Activated CD4-positive, alpha-beta T cell treated with anti-CD3 and anti-CD28 coated beads, Interleukin-2, amount 10 ng/mL, durations not matched to agents 24 days and 14 days (primary cell): ENCODE measurements at regions of chr5 and their contacts with region 1.

Region 1: GRCh38 chr5:80083101-80083890 is 48.1 kb downstream of the THBS4 start:
- DNase-seq: peak; percentile 72
- H3K4me3 Mint-ChIP-seq: peak overlapping the region; percentile 76
- H3K27ac Mint-ChIP-seq: peak overlapping the region; percentile 81
- H3K4me1 Mint-ChIP-seq: peaks cover 7% of the 10 kb centered on the region
- H3K27me3 Mint-ChIP-seq: no peaks in the 10 kb centered on the region

Region 2: DNA sequence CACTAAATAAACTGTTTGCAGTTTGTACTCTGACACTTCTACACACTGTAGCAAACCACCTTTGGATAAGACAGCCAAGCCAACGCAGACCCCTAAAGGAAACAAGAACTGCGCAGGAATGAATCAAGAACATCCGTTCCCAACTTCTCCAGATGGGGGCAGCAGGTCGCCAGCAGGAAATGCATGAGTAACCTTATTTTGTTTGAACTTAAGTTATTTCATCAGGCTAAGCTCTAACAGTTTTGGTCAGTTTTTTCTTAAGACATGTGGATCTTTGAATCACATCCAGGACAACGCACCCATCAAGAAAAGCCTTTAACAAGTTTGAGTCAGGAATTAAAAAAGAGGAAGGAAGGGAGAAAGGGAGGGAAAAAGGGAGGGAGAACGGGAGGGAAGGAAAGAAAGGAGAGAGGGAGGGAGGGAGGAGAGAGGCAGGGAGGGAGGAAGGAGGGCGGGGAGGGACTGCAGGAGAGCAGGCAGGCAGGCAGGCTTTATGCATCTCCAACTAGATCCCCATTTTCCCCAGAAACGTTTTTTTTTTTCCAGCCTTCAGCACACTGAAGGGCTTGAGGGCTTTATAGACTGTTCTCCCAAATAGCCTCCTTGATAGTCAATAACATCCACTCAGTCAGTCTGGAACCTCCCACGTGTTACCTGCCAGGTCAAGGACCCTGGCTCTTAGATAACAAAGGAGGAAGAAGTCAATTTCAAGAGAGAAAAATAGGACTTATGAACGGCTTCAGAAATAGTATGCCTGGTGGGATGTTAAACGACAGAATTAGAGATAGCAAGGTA is 949.4 kb before region 1 on chr5:
- intact Hi-C with region 1: loop called (anchors 2 kb)
- DNase-seq: peak; percentile 88
- H3K4me3 Mint-ChIP-seq: peak overlapping the region; percentile 41
- H3K27ac Mint-ChIP-seq: peak overlapping the region; percentile 69
- H3K4me1 Mint-ChIP-seq: peaks cover 5% of the 10 kb centered on the region
- H3K27me3 Mint-ChIP-seq: peaks cover 1% of the 10 kb centered on the region

Region 3: GRCh38 chr5:79702606-79703382 is 380.5 kb before region 1 on chr5:
- intact Hi-C with region 1: loop called (anchors 1 kb)
- DNase-seq: peak; percentile 77
- H3K4me3 Mint-ChIP-seq: no peak overlapping the region
- H3K27ac Mint-ChIP-seq: no peak overlapping the region
- H3K4me1 Mint-ChIP-seq: peaks cover 18% of the 10 kb centered on the region
- H3K27me3 Mint-ChIP-seq: no peaks in the 10 kb centered on the region

Region 4: DNA sequence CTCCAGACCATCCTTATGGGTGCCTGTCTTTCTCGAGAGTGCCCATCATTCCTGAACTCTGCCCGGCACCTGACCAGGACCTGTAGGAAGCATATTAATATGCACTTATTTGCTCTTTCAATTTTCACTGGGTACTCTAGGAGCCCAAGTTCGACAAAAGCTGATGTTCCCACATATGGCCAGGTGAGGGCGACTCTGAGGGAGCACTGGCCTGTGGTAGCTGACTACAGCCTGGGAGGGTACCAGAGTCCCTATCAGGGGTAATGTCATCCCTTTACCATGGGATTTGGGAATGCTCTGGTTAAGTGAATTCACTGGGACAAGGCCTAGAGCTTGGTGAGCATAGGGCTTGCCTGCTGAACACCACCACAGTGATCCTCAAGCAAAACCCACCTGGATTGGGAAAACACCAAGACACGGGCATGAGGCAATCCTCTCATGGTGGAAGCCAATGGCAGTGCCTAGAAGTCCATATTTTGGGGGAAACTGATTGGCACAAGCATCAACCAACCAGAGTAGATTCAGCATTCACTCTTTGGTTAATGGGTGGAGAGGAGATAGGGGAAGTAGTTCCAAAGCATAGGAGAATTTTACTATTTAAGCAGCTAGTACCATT is 204.5 kb before region 1 on chr5:
- intact Hi-C with region 1: loop called (anchors 1 kb)
- DNase-seq: peak; percentile 77
- H3K4me3 Mint-ChIP-seq: no peak overlapping the region
- H3K27ac Mint-ChIP-seq: no peak overlapping the region
- H3K4me1 Mint-ChIP-seq: no peaks in the 10 kb centered on the region
- H3K27me3 Mint-ChIP-seq: no peaks in the 10 kb centered on the region

Region 5: DNA sequence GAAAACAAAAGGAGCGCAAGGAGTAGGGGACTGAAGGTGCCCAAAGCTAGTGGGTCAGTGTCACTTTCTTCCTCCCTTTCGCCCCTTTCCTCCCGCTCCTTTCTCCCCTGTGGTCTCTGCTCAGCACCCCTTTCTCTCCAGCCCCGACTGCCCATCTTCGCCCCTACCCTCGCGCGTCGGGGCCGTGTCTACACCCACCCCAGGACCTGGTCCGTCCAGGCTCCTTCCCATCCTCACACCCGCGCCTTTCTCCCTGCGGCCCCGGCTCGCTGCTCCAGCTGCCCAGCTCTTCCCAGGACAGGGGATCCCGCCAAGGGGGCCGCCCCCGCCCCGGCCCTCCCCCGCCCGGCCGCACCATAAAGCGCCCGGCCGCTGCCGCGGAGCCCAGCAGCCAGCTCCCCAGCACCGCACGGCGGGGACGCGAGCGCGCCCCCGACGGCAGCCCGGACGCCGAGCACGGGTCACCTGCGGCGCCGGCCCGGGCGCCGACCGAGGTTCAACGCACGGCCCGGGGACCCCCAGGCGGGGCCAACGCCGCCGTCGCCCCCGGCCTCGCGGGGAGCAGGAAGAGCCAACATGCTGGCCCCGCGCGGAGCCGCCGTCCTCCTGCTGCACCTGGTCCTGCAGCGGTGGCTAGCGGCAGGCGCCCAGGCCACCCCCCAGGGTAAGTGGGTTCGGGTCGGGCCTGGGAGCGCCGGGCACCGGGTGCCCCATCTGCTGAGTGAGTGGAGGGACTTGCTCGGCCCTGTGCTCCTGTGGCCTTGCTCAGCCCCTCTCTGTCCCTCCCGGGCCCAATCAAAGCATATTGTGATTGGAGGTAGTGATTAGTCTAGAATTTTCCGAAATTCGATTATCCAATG is 48.1 kb before region 1 on chr5 and contains the start of gene THBS4:
- intact Hi-C with region 1: no loop called
- DNase-seq: peak; percentile 61
- H3K4me3 Mint-ChIP-seq: peak within 1 kb of the TSS; percentile 75
- H3K27ac Mint-ChIP-seq: no peak within 1 kb of the TSS
- H3K4me1 Mint-ChIP-seq: peaks cover 25% of the 10 kb centered on the region
- H3K27me3 Mint-ChIP-seq: peaks cover 55% of the 10 kb centered on the region
- total RNA-seq, gene THBS4: 1.3 and 2.1 TPM in 2 replicates

Region 6: DNA sequence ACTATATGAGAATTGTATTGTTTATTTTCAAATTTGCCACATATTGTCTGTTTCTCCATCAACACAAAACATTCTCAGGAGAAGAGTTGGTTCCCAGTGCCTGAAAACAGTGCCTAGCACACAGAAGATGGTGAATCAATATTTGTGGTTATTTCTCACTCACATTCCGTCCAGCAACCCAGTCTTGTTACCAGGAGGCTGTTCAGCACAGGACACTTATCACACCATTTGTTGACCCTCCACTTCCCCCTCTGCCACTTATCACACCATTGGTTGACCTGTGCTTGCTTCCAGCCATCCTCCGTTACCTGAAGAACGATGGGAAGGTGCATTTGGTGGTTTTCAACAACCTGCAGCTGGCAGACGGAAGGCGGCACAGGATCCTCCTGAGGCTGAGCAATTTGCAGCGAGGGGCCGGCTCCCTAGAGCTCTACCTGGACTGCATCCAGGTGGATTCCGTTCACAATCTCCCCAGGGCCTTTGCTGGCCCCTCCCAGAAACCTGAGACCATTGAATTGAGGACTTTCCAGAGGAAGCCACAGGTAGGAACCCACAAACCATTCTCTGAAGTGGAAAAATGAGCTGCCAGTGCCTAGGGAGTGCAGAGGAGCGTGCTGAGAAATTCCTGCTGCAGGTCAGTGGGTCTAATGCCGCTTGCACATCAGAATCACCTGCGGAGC is 27.7 kb before region 1 on chr5:
- intact Hi-C with region 1: loop called (anchors 2 kb)
- DNase-seq: no peak
- H3K4me3 Mint-ChIP-seq: no peak overlapping the region
- H3K27ac Mint-ChIP-seq: no peak overlapping the region
- H3K4me1 Mint-ChIP-seq: no peaks in the 10 kb centered on the region
- H3K27me3 Mint-ChIP-seq: no peaks in the 10 kb centered on the region